ENCODE measurements at regions of chr7 and their contacts with region 1.

Region 1: GRCh38 chr7:148914208-148914777 is 30.2 kb upstream of the EZH2 start:
- DNase-seq: peak; percentile 75
- H3K4me3 Mint-ChIP-seq: peak overlapping the region; percentile 61
- H3K27ac Mint-ChIP-seq: peak overlapping the region; percentile 96
- H3K4me1 Mint-ChIP-seq: peaks cover 71% of the 10 kb centered on the region
- H3K27me3 Mint-ChIP-seq: no peaks in the 10 kb centered on the region

Region 2: DNA sequence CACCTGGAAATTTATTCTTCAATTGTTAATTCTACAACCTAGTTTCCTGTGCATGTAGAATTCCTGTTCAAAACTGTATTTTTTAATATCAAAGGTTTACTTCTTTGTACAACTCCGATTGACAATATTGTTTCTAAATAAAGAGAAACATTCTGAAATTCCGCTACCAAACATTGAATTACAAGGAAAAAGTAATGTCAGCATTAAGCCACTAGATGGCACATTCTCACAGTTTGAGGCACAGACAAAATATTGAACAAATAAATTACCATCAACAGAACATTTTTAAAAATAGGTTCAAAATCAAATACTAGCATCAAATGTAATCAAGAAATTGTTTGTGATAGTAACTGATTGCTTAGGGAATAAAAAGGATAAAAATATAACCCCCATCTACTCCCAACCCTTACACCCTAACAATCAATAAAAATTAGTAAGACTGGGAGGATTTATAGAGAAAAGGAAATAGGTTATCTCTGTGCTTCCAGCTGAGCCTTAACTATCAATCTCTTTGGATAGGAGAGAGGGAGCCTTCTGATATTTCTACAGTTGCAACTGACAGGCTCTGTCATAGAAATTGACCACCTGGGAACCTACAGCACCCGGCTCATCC is 410.3 kb before region 1 on chr7:
- CTCF ChIA-PET with region 1: no interaction called
- intact Hi-C with region 1: loop called (anchors 1 kb)
- DNase-seq: no peak
- H3K4me3 Mint-ChIP-seq: no peak overlapping the region
- H3K27ac Mint-ChIP-seq: no peak overlapping the region
- H3K4me1 Mint-ChIP-seq: peaks cover 32% of the 10 kb centered on the region
- H3K27me3 Mint-ChIP-seq: peaks cover 21% of the 10 kb centered on the region

Region 3: GRCh38 chr7:148584154-148584827 is 330.0 kb before region 1 on chr7:
- CTCF ChIA-PET with region 1: no interaction called
- intact Hi-C with region 1: loop called (anchors 1 kb)
- DNase-seq: peak; percentile 42
- H3K4me3 Mint-ChIP-seq: no peak overlapping the region
- H3K27ac Mint-ChIP-seq: no peak overlapping the region
- H3K4me1 Mint-ChIP-seq: peaks cover 17% of the 10 kb centered on the region
- H3K27me3 Mint-ChIP-seq: no peaks in the 10 kb centered on the region

Region 4: GRCh38 chr7:148609045-148609725 is 305.1 kb before region 1 on chr7:
- CTCF ChIA-PET with region 1: no interaction called
- intact Hi-C with region 1: no loop called
- DNase-seq: no peak
- H3K4me3 Mint-ChIP-seq: no peak overlapping the region
- H3K27ac Mint-ChIP-seq: no peak overlapping the region
- H3K4me1 Mint-ChIP-seq: peaks cover 15% of the 10 kb centered on the region
- H3K27me3 Mint-ChIP-seq: peaks cover 2% of the 10 kb centered on the region

Region 5: DNA sequence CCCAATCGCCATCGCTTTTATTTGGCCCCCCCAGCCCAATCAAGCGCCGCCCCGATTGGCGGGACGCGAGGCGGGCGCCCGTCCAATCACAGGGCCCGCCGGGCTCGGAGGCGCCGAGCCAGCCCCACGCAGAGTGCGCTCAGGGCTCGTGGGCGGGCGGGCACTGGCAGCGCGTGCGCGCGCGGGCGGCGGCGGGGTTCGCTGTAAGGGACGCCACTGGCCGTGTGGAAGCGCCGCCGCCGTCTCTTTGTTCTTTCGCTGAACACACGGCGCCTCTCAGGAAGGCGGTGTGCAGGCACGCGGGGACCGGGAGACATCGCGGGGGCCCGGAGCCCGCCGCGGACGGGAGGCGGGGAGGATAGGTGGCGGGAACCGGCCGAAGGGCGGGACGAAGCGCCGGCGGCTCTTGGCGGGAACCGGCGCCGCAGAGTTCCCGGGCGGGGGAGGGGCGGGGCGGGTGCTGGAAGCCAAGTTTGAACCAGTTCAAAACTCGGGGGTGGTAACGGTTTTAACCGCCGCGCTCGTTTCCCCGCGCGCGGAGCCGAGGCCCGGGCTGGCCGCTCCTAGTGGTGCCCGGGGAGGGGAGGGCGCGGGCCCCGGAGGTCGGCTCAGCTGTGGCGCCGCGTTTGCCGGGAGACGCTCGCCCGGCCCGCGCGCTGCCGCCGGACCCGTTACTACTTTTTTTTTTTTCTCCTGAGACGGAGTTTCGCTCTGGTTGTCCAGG is 29.8 kb before region 1 on chr7:
- CTCF ChIA-PET with region 1: no interaction called
- intact Hi-C with region 1: loop called (anchors 1 kb)
- DNase-seq: peak; percentile 93
- H3K4me3 Mint-ChIP-seq: peak overlapping the region; percentile 94
- H3K27ac Mint-ChIP-seq: peak overlapping the region; percentile 99
- H3K4me1 Mint-ChIP-seq: peaks cover 37% of the 10 kb centered on the region
- H3K27me3 Mint-ChIP-seq: no peaks in the 10 kb centered on the region

Region 6: DNA sequence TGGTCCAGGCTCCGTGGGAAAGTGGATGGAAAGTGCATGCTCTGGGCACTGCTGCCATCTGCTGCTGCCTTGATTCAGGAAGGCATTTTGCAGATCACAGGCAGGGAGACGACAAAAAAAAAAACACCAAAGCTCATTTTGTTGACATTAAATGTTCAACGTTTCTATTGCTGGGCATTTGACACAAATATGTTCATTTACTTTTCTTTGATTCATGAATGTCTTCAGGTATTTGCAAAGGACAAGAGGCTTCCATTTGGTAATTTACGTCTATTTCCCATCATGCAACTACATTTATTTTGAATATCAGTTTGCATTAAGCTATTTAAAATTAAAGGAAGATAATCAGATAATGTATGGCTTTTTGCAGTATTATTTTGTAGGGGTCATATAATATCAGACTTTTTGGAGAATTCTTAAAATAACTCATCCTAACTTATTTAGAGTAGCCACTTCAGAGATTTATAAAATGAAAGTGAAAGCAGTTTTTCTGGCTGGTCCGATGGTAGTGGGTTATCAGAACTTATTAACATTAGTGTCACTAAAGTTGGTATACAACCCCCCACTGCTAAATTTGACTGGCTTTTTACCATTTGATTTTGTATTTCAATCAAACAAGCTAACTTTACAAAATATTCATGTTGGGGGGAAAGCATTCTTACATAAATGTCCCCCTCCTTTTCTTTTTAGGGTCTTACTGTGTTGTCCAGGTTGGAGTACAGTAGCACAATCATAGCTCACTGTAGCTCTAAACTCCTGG is 48.7 kb after region 1 on chr7:
- CTCF ChIA-PET with region 1: interaction called, 4 read pairs
- intact Hi-C with region 1: loop called (anchors 1 kb)
- DNase-seq: peak; percentile 86
- H3K4me3 Mint-ChIP-seq: peak overlapping the region; percentile 91
- H3K27ac Mint-ChIP-seq: peak overlapping the region; percentile 95
- H3K4me1 Mint-ChIP-seq: peaks cover 25% of the 10 kb centered on the region
- H3K27me3 Mint-ChIP-seq: no peaks in the 10 kb centered on the region

Region 7: GRCh38 chr7:148994601-148995000 is 80.3 kb after region 1 on chr7:
- CTCF ChIA-PET with region 1: no interaction called
- intact Hi-C with region 1: no loop called
- DNase-seq: no peak
- H3K4me3 Mint-ChIP-seq: no peak overlapping the region
- H3K27ac Mint-ChIP-seq: no peak overlapping the region
- H3K4me1 Mint-ChIP-seq: no peaks in the 10 kb centered on the region
- H3K27me3 Mint-ChIP-seq: no peaks in the 10 kb centered on the region

Region 8: DNA sequence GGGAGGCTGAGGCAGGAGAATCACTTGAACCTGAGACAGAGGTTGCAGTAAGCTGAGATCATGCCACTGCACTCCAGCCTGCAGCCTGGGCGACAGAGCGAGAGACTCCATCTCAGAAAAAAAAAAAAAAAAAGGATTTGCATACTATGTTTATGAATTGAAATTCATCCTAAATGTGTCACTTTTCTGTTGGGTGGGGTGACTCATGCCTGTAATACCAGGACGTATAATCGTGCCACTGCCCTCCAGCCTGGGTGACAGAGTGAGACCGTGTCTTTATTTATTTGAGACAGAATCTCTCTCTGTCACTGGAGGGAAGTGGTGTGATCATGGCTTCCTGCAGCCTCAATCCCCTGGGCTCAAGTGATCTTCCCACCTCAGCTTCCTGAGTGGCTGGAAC is 331.0 kb after region 1 on chr7:
- CTCF ChIA-PET with region 1: no interaction called
- intact Hi-C with region 1: loop called (anchors 1 kb)
- DNase-seq: peak; percentile 75
- H3K4me3 Mint-ChIP-seq: no peak overlapping the region
- H3K27ac Mint-ChIP-seq: peak overlapping the region; percentile 91
- H3K4me1 Mint-ChIP-seq: peaks cover 75% of the 10 kb centered on the region
- H3K27me3 Mint-ChIP-seq: no peaks in the 10 kb centered on the region

Measured in activated naive CD4-positive, alpha-beta T cell treated with anti-CD3 and anti-CD28 coated beads for 36 hours (primary cell).